AG04450 (cell line): ENCODE measurements at regions of chr5 and their contacts with region 1.

Region 1: GRCh38 chr5:38441453-38442246 is 114.8 kb downstream of the LIFR start:
- DNase-seq: peak; percentile 82
- H3K4me3 ChIP-seq: no peak overlapping the region
- H3K27ac ChIP-seq: no peak overlapping the region
- H3K27me3 ChIP-seq: peaks cover 2% of the 10 kb centered on the region
- CTCF ChIP-seq: peak; percentile 99

Region 2: GRCh38 chr5:38414348-38414747 is 27.3 kb before region 1 on chr5:
- CTCF ChIA-PET with region 1: interaction called, 55 read pairs
- POLR2A ChIA-PET with region 1: no interaction called
- DNase-seq: no peak
- H3K4me3 ChIP-seq: no peak overlapping the region
- H3K27ac ChIP-seq: no peak overlapping the region
- H3K27me3 ChIP-seq: peaks cover 16% of the 10 kb centered on the region
- CTCF ChIP-seq: no peak

Region 3: DNA sequence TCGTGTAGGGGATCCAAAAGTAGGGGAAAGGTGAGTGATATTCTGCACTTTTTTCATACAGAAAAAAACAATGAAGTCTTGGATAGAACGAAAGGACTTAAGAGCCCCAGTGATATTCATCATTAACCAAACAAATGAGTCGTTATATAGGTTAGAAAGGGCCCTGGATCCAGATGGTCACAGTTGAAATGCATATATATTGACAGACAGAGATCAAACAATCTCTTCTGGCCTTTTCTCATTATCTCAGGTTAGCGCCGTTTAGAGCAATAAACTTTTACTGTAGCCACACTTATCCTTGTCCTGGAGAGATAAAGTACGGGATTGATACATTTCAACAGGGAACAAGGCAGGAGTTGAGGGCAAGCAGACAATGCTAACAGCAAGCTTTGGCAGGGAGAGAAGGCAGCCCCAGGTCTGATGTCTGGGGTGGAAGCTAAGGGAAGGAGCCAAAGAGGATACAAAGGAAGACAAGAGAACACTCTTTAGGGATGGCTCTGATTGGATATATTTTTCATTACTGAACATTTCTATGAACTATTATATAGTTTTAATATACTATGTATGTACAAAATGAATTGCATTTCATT is 37.8 kb after region 1 on chr5:
- CTCF ChIA-PET with region 1: interaction called, 44 read pairs
- POLR2A ChIA-PET with region 1: no interaction called
- DNase-seq: no peak
- H3K4me3 ChIP-seq: no peak overlapping the region
- H3K27ac ChIP-seq: no peak overlapping the region
- H3K27me3 ChIP-seq: no peaks in the 10 kb centered on the region
- CTCF ChIP-seq: no peak

Region 4: DNA sequence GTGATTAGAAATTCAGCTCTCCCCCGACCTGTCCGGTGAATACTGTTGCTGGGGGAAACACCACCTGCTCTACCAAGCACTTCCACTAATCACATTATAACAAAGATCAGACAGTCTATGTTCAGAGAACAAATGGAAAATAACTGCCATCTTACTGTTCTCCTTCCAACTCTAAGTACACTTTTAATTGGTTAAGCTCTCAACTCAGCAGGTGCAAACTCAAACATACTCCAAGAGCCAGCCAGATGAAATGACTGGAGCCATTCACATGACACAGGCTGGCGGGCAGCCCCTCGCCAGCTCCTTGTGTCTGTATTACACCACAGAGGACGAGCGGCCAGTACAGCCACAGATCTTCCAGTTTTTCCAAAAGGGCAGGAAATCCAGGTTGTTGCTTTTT is 98.7 kb after region 1 on chr5:
- CTCF ChIA-PET with region 1: interaction called, 28 read pairs
- POLR2A ChIA-PET with region 1: no interaction called
- DNase-seq: no peak
- H3K4me3 ChIP-seq: no peak overlapping the region
- H3K27ac ChIP-seq: no peak overlapping the region
- H3K27me3 ChIP-seq: no peaks in the 10 kb centered on the region
- CTCF ChIP-seq: no peak

Region 5: DNA sequence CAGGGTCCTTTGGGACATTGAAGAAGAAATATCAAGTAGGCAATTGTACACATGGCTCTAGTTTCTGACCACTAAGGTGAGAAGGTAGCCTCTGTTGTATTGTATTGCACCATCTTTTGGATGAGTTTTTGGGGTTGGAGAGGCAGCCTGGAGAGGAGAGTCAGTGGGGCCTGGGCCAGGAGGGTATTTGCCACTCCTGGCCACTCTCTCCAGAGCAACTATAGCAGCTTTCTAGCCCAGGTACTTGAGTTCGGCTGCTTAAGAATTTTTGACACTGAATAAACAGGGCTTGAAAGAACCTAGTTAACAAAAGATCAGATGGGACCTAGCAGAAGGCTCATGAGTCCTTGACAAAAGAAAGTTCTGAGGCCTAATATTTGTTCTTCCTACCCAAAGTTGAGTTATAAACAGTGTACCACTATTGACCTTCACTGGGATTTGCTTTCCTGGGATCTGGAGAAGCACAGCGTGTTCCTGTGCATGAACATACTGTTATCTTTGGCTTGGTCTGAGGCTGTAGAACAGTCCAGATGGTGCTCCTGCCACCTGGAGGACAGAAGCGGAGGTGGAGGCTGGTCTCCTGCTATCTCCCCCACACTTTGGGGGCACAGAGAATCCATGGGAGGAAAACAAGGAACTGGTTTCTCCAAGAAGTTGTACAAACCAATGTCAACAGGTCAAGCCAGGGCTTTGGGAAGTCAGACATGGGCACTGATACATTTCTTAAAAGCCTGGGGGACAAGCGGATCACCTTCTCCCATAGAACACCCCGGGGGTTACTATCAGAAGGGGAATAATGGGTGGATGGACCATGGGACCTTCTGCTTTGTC is 225.2 kb after region 1 on chr5:
- CTCF ChIA-PET with region 1: interaction called, 17 read pairs
- POLR2A ChIA-PET with region 1: no interaction called
- DNase-seq: no peak
- H3K4me3 ChIP-seq: no peak overlapping the region
- H3K27ac ChIP-seq: no peak overlapping the region
- H3K27me3 ChIP-seq: peaks cover 7% of the 10 kb centered on the region
- CTCF ChIP-seq: peak; percentile 70

Region 6: GRCh38 chr5:38800515-38800914 is 358.9 kb after region 1 on chr5:
- CTCF ChIA-PET with region 1: interaction called, 364 read pairs
- POLR2A ChIA-PET with region 1: no interaction called
- DNase-seq: no peak
- H3K4me3 ChIP-seq: no peak overlapping the region
- H3K27ac ChIP-seq: no peak overlapping the region
- H3K27me3 ChIP-seq: no peaks in the 10 kb centered on the region
- CTCF ChIP-seq: no peak

Region 7: GRCh38 chr5:38845526-38846378 is 404.1 kb after region 1 on chr5 and contains the start of gene OSMR:
- CTCF ChIA-PET with region 1: interaction called, 22 read pairs
- POLR2A ChIA-PET with region 1: no interaction called
- DNase-seq: peak; percentile 97
- H3K4me3 ChIP-seq: peak within 1 kb of the TSS; percentile 89
- H3K27ac ChIP-seq: peak within 1 kb of the TSS; percentile 92
- H3K27me3 ChIP-seq: no peaks in the 10 kb centered on the region
- CTCF ChIP-seq: no peak
- polyA plus RNA-seq, gene OSMR: 100 and 102 TPM in 2 replicates